Naive thymus-derived CD4-positive, alpha-beta T cell (primary cell): ENCODE measurements at regions of chr11 and their contacts with region 1.

Region 1: GRCh38 chr11:119057000-119057769 is at the start of gene HYOU1:
- DNase-seq: peak; percentile 97 to 98 (median 98)
- ATAC-seq: peak; percentile 98
- H3K4me3 ChIP-seq: peak within 1 kb of the TSS; percentile 73
- H3K4me3 Mint-ChIP-seq: peak within 1 kb of the TSS; percentile 90 to 99 (median 95)
- H3K27ac ChIP-seq: peak within 1 kb of the TSS; percentile 96
- H3K27ac Mint-ChIP-seq: peak within 1 kb of the TSS; percentile 86 to 99 (median 95)
- H3K4me1 ChIP-seq: peaks cover 18 to 20% of the 10 kb centered on the region in 2 donors
- H3K4me1 Mint-ChIP-seq: peaks cover 22 to 44% (median 35%) of the 10 kb centered on the region in 7 donors
- H3K27me3 ChIP-seq: no peaks in the 10 kb centered on the region
- H3K27me3 Mint-ChIP-seq: no peaks in the 10 kb centered on the region
- total RNA-seq, gene HYOU1: 77.8 to 198 (median 110) TPM

Region 2: GRCh38 chr11:118997627-118998387 is 59.4 kb before region 1 on chr11 and contains the start of gene CENATAC:
- CTCF ChIA-PET with region 1: no interaction called
- POLR2A ChIA-PET with region 1: interaction called, 5 read pairs
- intact Hi-C with region 1: loop called (anchors 1 kb)
- DNase-seq: peak; percentile 91 to 98 (median 94)
- ATAC-seq: peak; percentile 98
- H3K4me3 ChIP-seq: peak within 1 kb of the TSS; percentile 91
- H3K4me3 Mint-ChIP-seq: peak within 1 kb of the TSS; percentile 87 to 99 (median 94)
- H3K27ac ChIP-seq: peak within 1 kb of the TSS; percentile 85
- H3K27ac Mint-ChIP-seq: peak within 1 kb of the TSS; percentile 87 to 98 (median 92)
- H3K4me1 ChIP-seq: peaks cover 6 to 16% of the 10 kb centered on the region in 2 donors
- H3K4me1 Mint-ChIP-seq: peaks cover 26 to 45% (median 37%) of the 10 kb centered on the region in 7 donors
- H3K27me3 ChIP-seq: no peaks in the 10 kb centered on the region
- H3K27me3 Mint-ChIP-seq: no peaks in the 10 kb centered on the region
- total RNA-seq, gene CENATAC: 53.5 to 136 (median 109) TPM

Region 3: DNA sequence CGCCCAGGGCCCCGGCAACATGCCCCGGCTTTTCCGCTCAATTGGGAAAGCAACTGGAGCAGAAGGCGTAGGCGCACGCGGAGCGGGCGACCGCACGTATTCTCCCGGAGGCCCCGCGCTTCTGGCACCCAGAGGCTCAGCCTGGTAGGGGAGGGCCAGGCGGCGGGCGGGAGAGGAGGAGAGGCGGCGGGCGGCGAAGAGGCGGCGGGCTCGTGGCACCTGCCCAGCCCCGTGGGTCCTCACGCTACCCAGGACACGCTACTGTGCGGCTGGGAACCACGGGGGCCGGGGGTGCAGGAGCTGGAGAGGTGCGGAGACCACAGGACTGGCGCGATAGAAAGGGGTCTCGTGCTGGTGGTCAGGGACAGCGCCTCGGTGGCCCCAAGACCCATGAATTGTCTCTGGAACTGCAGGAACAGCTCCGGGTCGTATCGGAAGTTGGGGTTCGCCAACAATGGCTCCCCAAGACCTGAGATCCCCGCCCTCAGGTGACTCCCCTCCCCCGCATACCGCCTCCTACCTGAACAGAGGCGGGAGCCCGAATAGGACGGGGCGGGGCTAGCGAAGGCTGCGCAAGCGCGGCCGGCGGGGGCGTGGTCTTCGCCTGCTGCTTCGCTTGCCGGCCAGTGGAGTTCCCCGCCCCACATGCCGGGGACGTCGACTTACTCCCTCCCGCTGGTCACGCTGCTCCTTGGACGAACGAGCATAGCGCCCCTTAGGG is 26.7 kb before region 1 on chr11 and contains the start of gene SLC37A4:
- CTCF ChIA-PET with region 1: interaction called, 3 read pairs
- POLR2A ChIA-PET with region 1: interaction called, 3 read pairs
- intact Hi-C with region 1: loop called (anchors 1 kb)
- DNase-seq: peak; percentile 96 to 100 (median 98)
- ATAC-seq: peak; percentile 97
- H3K4me3 ChIP-seq: peak within 1 kb of the TSS; percentile 91
- H3K4me3 Mint-ChIP-seq: peak within 1 kb of the TSS; percentile 62 to 93 (median 82)
- H3K27ac ChIP-seq: peak within 1 kb of the TSS; percentile 79
- H3K27ac Mint-ChIP-seq: peak within 1 kb of the TSS; percentile 59 to 93 (median 81)
- H3K4me1 ChIP-seq: peaks cover 0 to 10% of the 10 kb centered on the region in 2 donors
- H3K4me1 Mint-ChIP-seq: peaks cover 12 to 24% (median 17%) of the 10 kb centered on the region in 7 donors
- H3K27me3 ChIP-seq: no peaks in the 10 kb centered on the region
- H3K27me3 Mint-ChIP-seq: no peaks in the 10 kb centered on the region
- total RNA-seq, gene SLC37A4: 7.1 to 20.8 (median 14.6) TPM

Region 4: DNA sequence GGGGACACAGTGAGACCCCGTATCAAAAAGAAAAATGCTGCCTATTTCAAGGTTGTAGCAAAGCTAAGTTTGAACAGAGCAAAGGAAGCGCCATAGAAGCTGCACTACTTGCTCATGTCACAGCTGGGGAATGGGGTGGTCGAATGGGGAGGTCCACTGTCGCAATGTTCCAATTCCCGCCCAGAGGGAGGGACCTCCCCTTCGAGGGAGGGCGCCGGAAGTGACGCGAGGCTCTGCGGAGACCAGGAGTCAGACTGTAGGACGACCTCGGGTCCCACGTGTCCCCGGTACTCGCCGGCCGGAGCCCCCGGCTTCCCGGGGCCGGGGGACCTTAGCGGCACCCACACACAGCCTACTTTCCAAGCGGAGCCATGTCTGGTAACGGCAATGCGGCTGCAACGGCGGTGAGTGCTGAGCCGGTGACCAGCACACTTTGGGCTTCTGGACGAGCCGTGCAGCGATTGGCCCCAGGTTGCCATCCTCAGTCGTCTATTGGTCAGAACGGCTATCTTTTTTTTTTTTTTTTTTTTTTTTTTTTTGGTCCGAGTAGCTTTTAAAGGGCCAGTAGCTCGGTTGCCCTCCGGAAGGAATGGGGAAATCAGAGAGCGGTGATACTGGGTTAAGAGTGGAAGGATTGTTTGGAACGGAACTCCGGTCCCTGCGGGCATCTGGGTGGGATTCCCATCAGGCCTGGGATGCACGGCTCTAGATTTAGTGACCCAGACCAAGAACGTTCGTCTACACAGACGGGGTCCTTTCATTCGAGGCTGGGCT is 27.7 kb after region 1 on chr11 and contains the start of gene HMBS:
- CTCF ChIA-PET with region 1: no interaction called
- POLR2A ChIA-PET with region 1: interaction called, 10 read pairs
- intact Hi-C with region 1: loop called (anchors 1 kb)
- DNase-seq: peak; percentile 83 to 93 (median 87)
- ATAC-seq: peak; percentile 97
- H3K4me3 ChIP-seq: peak within 1 kb of the TSS; percentile 81
- H3K4me3 Mint-ChIP-seq: peak within 1 kb of the TSS; percentile 85 to 98 (median 94)
- H3K27ac ChIP-seq: peak within 1 kb of the TSS; percentile 81
- H3K27ac Mint-ChIP-seq: peak within 1 kb of the TSS; percentile 87 to 97 (median 93)
- H3K4me1 ChIP-seq: peaks cover 8 to 9% of the 10 kb centered on the region in 2 donors
- H3K4me1 Mint-ChIP-seq: peaks cover 7 to 39% (median 17%) of the 10 kb centered on the region in 7 donors
- H3K27me3 ChIP-seq: no peaks in the 10 kb centered on the region
- H3K27me3 Mint-ChIP-seq: no peaks in the 10 kb centered on the region
- total RNA-seq, gene HMBS: 6.7 to 25.4 (median 7.7) TPM

Region 5: GRCh38 chr11:119381181-119381988 is 324.2 kb after region 1 on chr11 and contains the start of gene USP2:
- CTCF ChIA-PET with region 1: no interaction called
- POLR2A ChIA-PET with region 1: no interaction called
- intact Hi-C with region 1: loop called in 1 of 2 experiments (anchors 1 kb)
- DNase-seq: peak; percentile 94 to 98 (median 97)
- ATAC-seq: peak; percentile 99
- H3K4me3 ChIP-seq: peak within 1 kb of the TSS; percentile 81
- H3K4me3 Mint-ChIP-seq: no peak within 1 kb of the TSS
- H3K27ac ChIP-seq: peak within 1 kb of the TSS; percentile 71
- H3K27ac Mint-ChIP-seq: peak within 1 kb of the TSS in 1 of 9 donors; percentile 87
- H3K4me1 ChIP-seq: peaks cover 9 to 14% of the 10 kb centered on the region in 2 donors
- H3K4me1 Mint-ChIP-seq: peaks cover 0 to 13% (median 5%) of the 10 kb centered on the region in 7 donors
- H3K27me3 ChIP-seq: no peaks in the 10 kb centered on the region
- H3K27me3 Mint-ChIP-seq: peaks cover 0 to 9% (median 0%) of the 10 kb centered on the region in 5 donors
- total RNA-seq, gene USP2: 0.07 to 1.1 (median 0.43) TPM

Region 6: GRCh38 chr11:120893440-120894201 is 1836.4 kb after region 1 on chr11:
- CTCF ChIA-PET with region 1: no interaction called
- POLR2A ChIA-PET with region 1: no interaction called
- intact Hi-C with region 1: no loop called
- DNase-seq: no peak
- ATAC-seq: no peak
- H3K4me3 ChIP-seq: no peak overlapping the region
- H3K4me3 Mint-ChIP-seq: no peak overlapping the region
- H3K27ac ChIP-seq: no peak overlapping the region
- H3K27ac Mint-ChIP-seq: no peak overlapping the region
- H3K4me1 ChIP-seq: no peaks in the 10 kb centered on the region
- H3K4me1 Mint-ChIP-seq: no peaks in the 10 kb centered on the region
- H3K27me3 ChIP-seq: no peaks in the 10 kb centered on the region
- H3K27me3 Mint-ChIP-seq: peaks cover 0 to 21% (median 9%) of the 10 kb centered on the region in 5 donors